ENCODE measurements at regions of chr10 and their contacts with region 1.

Region 1: DNA sequence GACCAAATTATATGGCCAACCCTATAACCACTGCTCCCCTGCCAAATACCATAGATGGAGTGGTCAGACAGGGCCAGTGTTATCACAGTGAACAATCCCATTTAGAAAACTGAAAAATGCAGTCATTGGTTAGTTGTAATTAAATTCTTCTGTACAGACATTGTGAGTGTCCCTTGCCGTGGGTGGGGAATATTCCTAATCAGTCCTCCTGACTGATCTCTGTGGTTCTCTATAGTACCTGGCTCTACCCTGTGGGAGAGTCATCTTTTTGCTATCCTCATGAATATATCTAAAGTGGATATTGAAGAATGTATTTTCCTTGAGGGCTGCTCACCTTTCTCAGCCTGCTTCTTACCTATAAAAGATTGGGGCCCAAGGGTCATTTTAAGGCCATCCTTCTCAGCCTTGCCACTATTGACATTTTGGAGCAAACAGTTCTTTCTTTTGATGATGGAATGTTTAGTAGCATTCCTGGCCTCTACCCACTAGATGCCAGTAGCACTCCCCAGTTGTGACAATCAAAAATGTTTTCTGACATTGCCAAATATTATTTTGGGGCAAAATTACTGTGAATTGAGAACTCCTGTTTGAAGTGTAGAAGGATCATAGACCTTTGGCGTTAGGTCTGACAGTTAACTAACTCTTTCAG is 110.2 kb downstream of the MAPK8 start:
- DNase-seq: peak; percentile 60 to 62
- H3K4me3 ChIP-seq: no peak overlapping the region
- H3K4me3 Mint-ChIP-seq: peak overlapping the region; percentile 42
- H3K27ac Mint-ChIP-seq: peak overlapping the region; percentile 29
- H3K4me1 ChIP-seq: peaks cover 34% of the 10 kb centered on the region
- H3K4me1 Mint-ChIP-seq: peaks cover 28% of the 10 kb centered on the region
- H3K27me3 ChIP-seq: no peaks in the 10 kb centered on the region
- H3K27me3 Mint-ChIP-seq: no peaks in the 10 kb centered on the region
- CTCF ChIP-seq: peak in 1 of 2 experiments; percentile 53

Region 2: DNA sequence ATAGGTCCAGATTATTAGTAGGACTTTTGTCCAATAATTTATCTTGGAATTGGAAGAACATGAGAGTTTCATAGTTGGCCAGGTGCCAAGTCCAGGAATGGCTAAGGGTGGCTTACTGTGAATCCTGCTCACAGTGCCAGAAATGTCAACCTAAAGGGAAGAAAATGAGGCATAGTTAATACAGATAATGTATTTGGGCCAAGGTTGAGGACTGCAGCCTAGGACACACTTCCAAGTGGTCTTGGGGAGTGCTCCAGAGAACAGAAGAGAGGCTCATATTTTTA is 32.1 kb before region 1 on chr10:
- CTCF ChIA-PET with region 1: no interaction called
- POLR2A ChIA-PET with region 1: no interaction called
- intact Hi-C with region 1: loop called (anchors 2 kb)
- DNase-seq: no peak
- H3K4me3 ChIP-seq: no peak overlapping the region
- H3K4me3 Mint-ChIP-seq: no peak overlapping the region
- H3K27ac Mint-ChIP-seq: peak overlapping the region; percentile 90
- H3K4me1 ChIP-seq: peaks cover 57% of the 10 kb centered on the region
- H3K4me1 Mint-ChIP-seq: peaks cover 34% of the 10 kb centered on the region
- H3K27me3 ChIP-seq: no peaks in the 10 kb centered on the region
- H3K27me3 Mint-ChIP-seq: no peaks in the 10 kb centered on the region
- CTCF ChIP-seq: no peak

Region 3: DNA sequence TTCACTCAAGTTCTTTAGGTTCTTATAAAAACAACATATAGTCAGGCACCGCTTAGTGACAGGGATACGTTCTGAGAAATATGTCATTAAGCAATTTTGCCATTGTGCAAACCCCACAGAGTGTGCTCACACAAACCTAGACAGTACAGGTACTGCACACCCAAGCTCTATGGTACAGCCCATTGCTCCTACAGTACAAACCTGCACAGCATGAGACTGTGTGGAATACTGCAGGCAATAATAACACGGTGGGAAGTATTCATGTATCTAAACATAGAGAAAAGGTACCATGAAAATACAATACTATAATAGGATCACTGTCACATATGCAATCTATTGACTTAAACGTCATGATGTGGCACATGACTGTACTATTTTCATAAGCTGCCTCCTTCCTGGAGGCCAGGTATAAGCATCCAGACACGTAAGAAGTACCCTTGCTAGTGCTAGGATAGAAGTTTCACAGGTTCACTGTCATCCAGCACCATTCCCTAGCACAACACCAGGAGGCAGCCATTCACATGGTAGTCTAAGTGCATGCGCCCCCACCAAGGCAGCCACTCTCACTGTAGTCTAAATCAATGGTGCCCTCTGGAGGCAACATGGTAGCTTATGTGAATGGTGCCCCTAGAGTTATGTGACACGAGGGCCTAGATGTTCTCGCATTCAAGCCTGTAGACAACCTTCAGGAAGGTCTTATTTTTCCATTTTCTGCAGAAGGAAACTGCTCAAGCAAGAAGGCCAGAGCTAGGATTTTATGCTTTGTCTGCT is 89.6 kb after region 1 on chr10:
- CTCF ChIA-PET with region 1: interaction called, 6 read pairs
- POLR2A ChIA-PET with region 1: no interaction called
- intact Hi-C with region 1: loop called (anchors 1 kb)
- DNase-seq: peak; percentile 69 to 74
- H3K4me3 ChIP-seq: no peak overlapping the region
- H3K4me3 Mint-ChIP-seq: no peak overlapping the region
- H3K27ac Mint-ChIP-seq: no peak overlapping the region
- H3K4me1 ChIP-seq: no peaks in the 10 kb centered on the region
- H3K4me1 Mint-ChIP-seq: no peaks in the 10 kb centered on the region
- H3K27me3 ChIP-seq: no peaks in the 10 kb centered on the region
- H3K27me3 Mint-ChIP-seq: no peaks in the 10 kb centered on the region
- CTCF ChIP-seq: peak; percentile 56 to 68